SK-N-SH (cell line): ENCODE measurements at regions of chr2 and their contacts with region 1.

Region 1: DNA sequence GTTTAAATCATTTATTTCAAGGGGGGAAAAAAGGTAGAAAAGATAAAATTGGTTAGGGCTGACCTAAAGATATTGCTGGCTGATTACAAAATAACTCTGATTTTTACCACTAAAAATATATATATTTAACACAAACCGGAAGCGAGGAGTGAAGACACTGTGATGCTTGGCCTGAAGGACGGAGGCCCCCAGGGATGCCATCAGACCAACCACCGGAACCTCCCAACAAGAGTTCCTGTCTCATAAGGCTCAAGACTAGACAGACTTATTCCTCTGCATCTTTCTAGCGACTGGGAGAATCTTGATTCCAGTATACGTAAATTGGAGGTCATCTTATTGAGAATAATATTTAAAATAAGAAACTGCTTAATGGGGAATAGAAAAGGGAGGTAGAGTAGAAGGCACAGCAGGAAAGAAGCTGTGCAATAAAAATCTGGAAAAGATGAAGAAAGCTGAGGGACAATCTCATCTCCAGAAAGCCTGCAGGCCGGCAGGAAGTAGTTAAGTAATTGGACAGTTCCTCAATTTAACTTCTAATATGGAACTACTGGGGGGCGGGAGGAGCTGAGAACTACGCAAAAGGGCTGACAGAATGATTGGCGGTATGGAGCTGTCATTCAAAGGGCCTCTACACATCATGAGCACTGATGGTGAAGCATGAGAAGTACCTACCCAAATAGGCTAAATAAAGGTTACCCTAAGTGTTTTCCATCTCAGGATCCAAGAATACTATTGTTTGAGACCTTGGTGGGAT is 91.1 kb downstream of the DTNB start:
- DNase-seq: no peak
- H3K4me3 ChIP-seq: no peak overlapping the region
- H3K27ac ChIP-seq: no peak overlapping the region
- H3K4me1 ChIP-seq: peaks cover 10 to 12% of the 10 kb centered on the region in 2 experiments
- H3K27me3 ChIP-seq: no peaks in the 10 kb centered on the region
- CTCF ChIP-seq: no peak
- EP300 ChIP-seq: no peak
- RAD21 ChIP-seq: no peak

Region 2: DNA sequence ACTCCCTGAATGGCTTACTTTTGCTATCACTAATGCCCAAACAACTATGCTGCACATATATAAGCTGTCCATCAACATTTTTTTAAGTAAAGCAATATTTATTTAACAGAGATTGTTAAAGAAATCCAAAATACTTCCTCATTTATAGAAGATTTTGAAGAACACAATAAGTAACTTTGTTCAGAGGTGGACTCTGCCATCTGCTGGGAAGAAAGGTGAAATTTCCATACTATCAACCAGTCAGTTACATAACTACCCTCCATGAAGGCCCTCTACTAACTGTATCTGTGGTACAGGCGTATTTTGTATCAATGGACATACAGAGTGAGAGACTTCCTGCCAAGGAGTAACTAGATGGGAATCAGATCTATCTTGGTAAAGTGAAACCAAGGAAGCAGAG is 14.8 kb before region 1 on chr2:
- CTCF ChIA-PET with region 1: interaction called, 10 read pairs
- POLR2A ChIA-PET with region 1: no interaction called
- DNase-seq: peak; percentile 55
- H3K4me3 ChIP-seq: no peak overlapping the region; a peak in 1 of 4 replicates
- H3K27ac ChIP-seq: no peak overlapping the region
- H3K4me1 ChIP-seq: peaks cover 0 to 7% of the 10 kb centered on the region in 2 experiments; a peak in 1 of 4 replicates
- H3K27me3 ChIP-seq: no peaks in the 10 kb centered on the region
- CTCF ChIP-seq: peak; percentile 78
- EP300 ChIP-seq: no peak
- RAD21 ChIP-seq: peak; percentile 81